Transverse colon (tissue), 4 donors: ENCODE measurements at regions of chr9 and their contacts with region 1.

Region 1: GRCh38 chr9:29697011-29697410 is 2123.7 kb upstream of the C9orf72 start:
- DNase-seq: no peak
- H3K4me3 ChIP-seq: no peak overlapping the region
- H3K27ac ChIP-seq: no peak overlapping the region
- H3K4me1 ChIP-seq: no peaks in the 10 kb centered on the region
- H3K27me3 ChIP-seq: no peaks in the 10 kb centered on the region
- CTCF ChIP-seq: no peak
- EP300 ChIP-seq: no peak
- POLR2A ChIP-seq: no peak

Region 2: GRCh38 chr9:29740518-29740917 is 43.5 kb after region 1 on chr9:
- in situ Hi-C with region 1: no loop called
- intact Hi-C with region 1: loop called (anchors 1 kb)
- DNase-seq: no peak
- H3K4me3 ChIP-seq: no peak overlapping the region
- H3K27ac ChIP-seq: no peak overlapping the region
- H3K4me1 ChIP-seq: no peaks in the 10 kb centered on the region
- H3K27me3 ChIP-seq: no peaks in the 10 kb centered on the region
- CTCF ChIP-seq: no peak
- EP300 ChIP-seq: no peak
- POLR2A ChIP-seq: no peak